Right ventricle myocardium superior (tissue), 1 donor: ENCODE measurements at regions of chr15 and their contacts with region 1.

Region 1: GRCh38 chr15:85475317-85475701 is 94.9 kb downstream of the AKAP13 start:
- DNase-seq: no peak
- ATAC-seq: no peak

Region 2: GRCh38 chr15:85329561-85330422 is 145.5 kb before region 1 on chr15:
- intact Hi-C with region 1: loop called (anchors 10 kb)
- DNase-seq: peak; percentile 54
- ATAC-seq: peak; percentile 30